ENCODE measurements at regions of chr5 and their contacts with region 1.

Region 1: GRCh38 chr5:67516948-67517565 is 320.5 kb upstream of the CD180 start:
- DNase-seq: no peak
- ATAC-seq: no peak
- H3K4me3 ChIP-seq: no peak overlapping the region
- H3K27ac ChIP-seq: no peak overlapping the region
- H3K4me1 ChIP-seq: no peaks in the 10 kb centered on the region
- H3K27me3 ChIP-seq: no peaks in the 10 kb centered on the region; a peak in 1 of 5 replicates
- CTCF ChIP-seq: no peak
- EP300 ChIP-seq: no peak
- POLR2A ChIP-seq: no peak
- RAD21 ChIP-seq: no peak

Region 2: DNA sequence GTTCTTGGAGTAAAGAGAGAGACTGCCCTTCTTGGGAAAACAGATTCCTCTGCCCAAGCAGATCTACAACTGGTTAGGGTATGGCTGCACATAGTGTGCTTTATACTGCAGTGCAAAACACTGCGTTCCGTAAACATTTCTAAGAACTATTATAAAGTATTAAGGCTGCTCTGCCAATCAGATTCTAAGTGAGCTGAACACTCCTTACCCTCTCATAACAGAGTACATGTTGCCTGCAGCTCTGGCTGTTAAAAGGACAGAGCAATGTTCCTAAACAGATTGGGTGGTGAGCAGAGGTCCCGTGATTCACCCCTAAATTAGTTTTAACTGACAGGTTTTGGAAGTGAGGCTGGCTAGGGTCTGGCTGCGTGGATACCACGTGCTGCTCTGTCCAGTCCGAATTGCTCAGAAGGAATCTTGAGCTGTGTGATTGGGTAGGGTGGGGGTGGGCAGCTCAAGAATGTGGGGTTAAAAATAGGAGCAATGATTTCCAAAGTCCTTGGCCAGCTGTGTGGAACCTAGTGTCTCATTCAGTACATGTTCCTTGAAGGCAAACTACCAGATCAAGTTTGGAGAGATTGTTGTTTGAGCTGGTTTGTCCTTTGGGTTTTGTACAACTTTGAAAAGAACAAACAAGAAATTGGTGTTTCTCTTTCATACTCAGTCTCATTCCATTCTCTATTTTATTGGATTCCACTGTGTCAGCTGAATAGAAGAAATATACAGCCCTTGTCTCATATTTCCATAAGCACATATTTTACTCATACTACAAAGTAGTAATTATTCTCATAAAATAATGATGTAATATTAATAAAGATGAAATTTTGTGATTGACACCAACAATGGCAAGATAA is 177.1 kb after region 1 on chr5:
- CTCF ChIA-PET with region 1: no interaction called
- POLR2A ChIA-PET with region 1: no interaction called
- in situ Hi-C with region 1: no loop called
- intact Hi-C with region 1: no loop called
- DNase-seq: no peak
- ATAC-seq: no peak
- H3K4me3 ChIP-seq: no peak overlapping the region
- H3K27ac ChIP-seq: no peak overlapping the region
- H3K4me1 ChIP-seq: no peaks in the 10 kb centered on the region
- H3K27me3 ChIP-seq: no peaks in the 10 kb centered on the region
- CTCF ChIP-seq: no peak
- EP300 ChIP-seq: no peak
- POLR2A ChIP-seq: no peak
- RAD21 ChIP-seq: no peak

Region 3: DNA sequence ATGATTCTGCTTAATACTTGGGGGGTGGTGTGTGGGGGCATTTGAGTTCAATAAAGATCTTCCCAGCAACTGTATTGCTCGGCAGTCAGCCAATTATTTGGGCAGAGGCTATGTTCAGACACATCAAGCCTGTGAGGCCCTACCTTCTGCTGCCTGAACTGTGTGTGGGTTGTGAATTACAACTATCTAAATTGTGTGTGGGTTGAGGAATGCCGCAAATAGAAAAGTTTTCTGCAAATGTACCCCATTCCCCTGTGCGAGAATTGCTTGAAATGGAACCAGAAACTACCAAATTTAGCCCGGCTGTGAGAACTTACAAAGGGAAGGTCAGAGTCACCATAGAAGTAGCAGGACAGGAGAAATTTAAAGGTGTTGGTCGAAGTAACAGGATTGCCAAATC is 338.5 kb after region 1 on chr5:
- CTCF ChIA-PET with region 1: no interaction called
- POLR2A ChIA-PET with region 1: no interaction called
- in situ Hi-C with region 1: no loop called
- intact Hi-C with region 1: loop called (anchors 10 kb)
- DNase-seq: no peak
- ATAC-seq: no peak
- H3K4me3 ChIP-seq: no peak overlapping the region
- H3K27ac ChIP-seq: no peak overlapping the region
- H3K4me1 ChIP-seq: peaks cover 7% of the 10 kb centered on the region
- H3K27me3 ChIP-seq: no peaks in the 10 kb centered on the region
- CTCF ChIP-seq: no peak
- EP300 ChIP-seq: no peak
- POLR2A ChIP-seq: no peak
- RAD21 ChIP-seq: no peak